MCF 10A (cell line): ENCODE measurements at regions of chr3 and their contacts with region 1.

Region 1: DNA sequence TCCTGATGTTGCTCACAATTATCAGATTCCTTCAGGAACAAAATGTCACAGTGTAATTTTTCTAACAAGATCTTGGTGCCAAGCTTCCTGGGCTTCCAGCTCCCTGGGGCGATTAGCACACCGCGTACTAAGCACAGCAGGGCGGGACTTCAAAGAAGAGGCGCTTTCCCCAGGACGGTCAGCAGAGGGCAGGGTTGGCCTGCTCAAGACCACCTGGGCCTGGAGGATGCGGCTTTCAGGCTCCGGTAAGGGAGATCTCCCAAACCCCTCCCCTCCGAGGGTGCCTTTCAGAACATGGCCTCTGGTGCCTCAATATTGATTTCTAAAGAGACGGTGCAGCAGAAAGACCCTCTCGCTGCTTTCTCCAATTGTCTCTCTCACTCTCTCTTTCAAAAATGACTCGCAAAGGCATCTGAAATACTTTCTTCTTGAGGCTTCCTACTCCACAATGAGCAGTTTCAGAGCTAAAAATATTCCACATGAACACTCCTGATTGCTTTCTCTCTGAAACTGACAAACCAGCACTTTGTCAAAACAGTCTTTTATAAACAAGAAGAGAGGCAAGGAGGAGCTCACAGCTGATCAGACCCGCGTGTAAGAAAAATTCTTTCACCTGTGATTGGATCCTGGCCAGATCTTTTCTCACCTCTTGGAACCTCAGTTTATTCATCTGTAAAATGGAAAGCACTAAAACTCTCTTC is 154.0 kb downstream of the ADAMTS9 start:
- DNase-seq: peak; percentile 87
- H3K4me3 Mint-ChIP-seq: no peak overlapping the region
- H3K27ac Mint-ChIP-seq: no peak overlapping the region
- H3K4me1 Mint-ChIP-seq: peaks cover 15% of the 10 kb centered on the region
- H3K27me3 Mint-ChIP-seq: no peaks in the 10 kb centered on the region
- CTCF ChIP-seq: peak; percentile 93

Region 2: GRCh38 chr3:64685800-64686445 is 152.2 kb after region 1 on chr3:
- CTCF ChIA-PET with region 1: interaction called, 14 read pairs
- POLR2A ChIA-PET with region 1: interaction called, 5 read pairs
- intact Hi-C with region 1: loop called (anchors 2 kb)
- DNase-seq: peak; percentile 91
- H3K4me3 Mint-ChIP-seq: peak overlapping the region; percentile 81
- H3K27ac Mint-ChIP-seq: peak overlapping the region; percentile 83
- H3K4me1 Mint-ChIP-seq: peaks cover 16% of the 10 kb centered on the region
- H3K27me3 Mint-ChIP-seq: no peaks in the 10 kb centered on the region
- CTCF ChIP-seq: peak; percentile 38

Region 3: DNA sequence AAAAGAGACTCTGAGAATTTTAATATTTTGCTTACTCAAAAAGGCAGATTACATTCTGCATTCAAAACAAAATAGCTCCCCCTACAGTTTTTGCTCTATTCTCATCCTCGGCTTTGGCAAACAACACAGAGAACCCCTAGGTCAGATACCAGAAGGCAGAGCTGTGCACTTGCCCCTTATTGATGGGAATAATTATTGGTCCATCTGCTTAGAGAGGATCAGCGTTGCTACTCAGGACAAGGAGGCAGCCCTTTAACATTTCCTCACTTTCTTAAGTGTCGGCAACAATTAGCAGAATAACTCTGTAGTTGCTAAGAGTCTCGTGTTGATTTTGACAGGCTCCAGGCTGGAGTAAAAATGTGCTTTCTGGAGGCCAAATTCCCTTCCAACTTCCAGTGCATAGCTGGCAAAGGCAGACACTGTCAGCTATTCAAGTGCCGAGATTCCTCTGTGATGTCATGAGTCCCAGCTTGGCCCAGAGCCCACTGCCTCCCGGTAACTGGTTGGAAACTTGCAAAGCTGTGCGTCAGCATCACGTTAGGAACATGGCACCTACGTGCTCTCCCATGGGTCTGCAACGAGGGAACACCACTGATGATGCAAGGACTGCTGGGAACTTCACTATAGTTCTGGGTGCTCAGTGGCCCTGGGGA is 636.7 kb after region 1 on chr3:
- CTCF ChIA-PET with region 1: interaction called, 11 read pairs
- POLR2A ChIA-PET with region 1: no interaction called
- intact Hi-C with region 1: loop called (anchors 1 kb)
- DNase-seq: peak; percentile 89
- H3K4me3 Mint-ChIP-seq: no peak overlapping the region
- H3K27ac Mint-ChIP-seq: peak overlapping the region; percentile 28
- H3K4me1 Mint-ChIP-seq: peaks cover 18% of the 10 kb centered on the region
- H3K27me3 Mint-ChIP-seq: no peaks in the 10 kb centered on the region
- CTCF ChIP-seq: peak; percentile 40

Region 4: GRCh38 chr3:65412588-65412987 is 878.8 kb after region 1 on chr3:
- CTCF ChIA-PET with region 1: interaction called, 10 read pairs
- POLR2A ChIA-PET with region 1: no interaction called
- intact Hi-C with region 1: no loop called
- DNase-seq: peak; percentile 14
- H3K4me3 Mint-ChIP-seq: no peak overlapping the region
- H3K27ac Mint-ChIP-seq: no peak overlapping the region
- H3K4me1 Mint-ChIP-seq: no peaks in the 10 kb centered on the region
- H3K27me3 Mint-ChIP-seq: no peaks in the 10 kb centered on the region
- CTCF ChIP-seq: no peak

Region 5: GRCh38 chr3:65732051-65732935 is 1198.5 kb after region 1 on chr3:
- CTCF ChIA-PET with region 1: interaction called, 10 read pairs
- POLR2A ChIA-PET with region 1: no interaction called
- intact Hi-C with region 1: loop called (anchors 1 kb)
- DNase-seq: peak; percentile 71
- H3K4me3 Mint-ChIP-seq: no peak overlapping the region
- H3K27ac Mint-ChIP-seq: no peak overlapping the region
- H3K4me1 Mint-ChIP-seq: no peaks in the 10 kb centered on the region
- H3K27me3 Mint-ChIP-seq: no peaks in the 10 kb centered on the region
- CTCF ChIP-seq: peak; percentile 69